ENCODE measurements at regions of chr11 and their contacts with region 1.

Region 1: DNA sequence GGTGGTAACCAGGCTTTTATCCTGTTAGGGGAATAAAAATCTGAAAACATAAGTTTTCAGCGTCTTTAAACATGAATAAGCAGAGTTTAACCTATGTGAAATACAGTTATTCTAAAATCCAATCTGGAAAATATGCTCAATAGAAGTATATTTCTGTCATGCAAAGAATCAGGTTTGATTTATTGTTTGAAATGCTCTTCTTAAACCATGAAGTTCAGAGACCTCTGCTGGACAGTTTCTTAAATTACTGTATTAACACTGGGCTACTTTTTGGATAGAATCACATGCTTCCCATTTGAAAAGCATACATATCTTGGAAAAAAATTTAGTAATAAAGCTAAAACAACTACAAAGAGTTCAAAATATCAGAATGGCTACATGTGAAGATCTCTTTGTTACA is 25.4 kb downstream of the APIP start:
- DNase-seq: peak in 4 of 9 donors; percentile 1 to 23 (median 11)
- ATAC-seq: no peak
- H3K4me3 ChIP-seq: no peak overlapping the region
- H3K4me3 Mint-ChIP-seq: no peak overlapping the region
- H3K27ac ChIP-seq: no peak overlapping the region
- H3K27ac Mint-ChIP-seq: no peak overlapping the region
- H3K4me1 ChIP-seq: no peaks in the 10 kb centered on the region
- H3K4me1 Mint-ChIP-seq: peaks cover 0 to 5% (median 0%) of the 10 kb centered on the region in 7 donors
- H3K27me3 ChIP-seq: no peaks in the 10 kb centered on the region
- H3K27me3 Mint-ChIP-seq: no peaks in the 10 kb centered on the region

Region 2: DNA sequence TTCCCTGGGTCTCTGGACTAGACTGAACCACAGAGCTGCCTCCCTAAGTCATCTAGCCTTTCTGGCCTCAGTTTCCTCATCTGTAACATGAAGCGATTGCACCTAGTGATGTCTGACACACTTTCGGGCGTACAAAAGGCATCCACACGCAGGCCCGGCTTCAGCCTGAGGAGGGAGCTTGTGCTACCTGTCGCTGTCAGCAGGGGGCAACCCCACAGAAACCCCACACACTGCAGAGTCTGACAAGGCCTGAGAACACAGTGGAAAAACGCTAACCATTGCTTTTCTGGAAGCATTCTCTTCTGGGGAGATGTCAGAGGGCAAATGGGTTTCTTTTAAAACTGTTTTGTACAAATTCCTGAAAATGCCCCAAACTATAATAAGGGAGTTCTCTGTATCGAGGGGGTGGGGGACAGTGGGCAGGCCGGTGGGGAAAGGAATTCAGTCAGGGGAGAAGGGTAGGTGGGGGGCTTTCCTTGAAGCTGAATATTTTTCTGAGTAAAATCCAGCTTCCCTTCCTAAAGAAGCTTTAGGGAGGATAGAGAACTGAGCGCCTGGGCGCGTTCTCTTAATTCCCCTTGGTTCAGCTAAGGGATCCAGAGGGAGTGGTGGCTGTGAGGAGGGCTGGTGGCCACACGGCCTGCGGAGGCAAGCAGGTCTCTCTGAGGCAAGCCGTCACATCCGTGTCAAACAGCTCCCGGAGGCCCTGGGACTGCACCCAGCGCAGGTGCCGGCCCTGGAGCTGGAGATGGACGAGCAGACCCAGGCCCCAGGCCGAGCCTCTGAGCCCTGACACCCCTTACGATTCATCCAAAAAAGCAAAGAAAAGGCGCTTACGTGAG is 377.8 kb before region 1 on chr11:
- CTCF ChIA-PET with region 1: no interaction called
- POLR2A ChIA-PET with region 1: no interaction called
- intact Hi-C with region 1: loop called (anchors 1 to 2 kb)
- DNase-seq: peak in 8 of 9 donors; percentile 3 to 37 (median 25)
- ATAC-seq: peak; percentile 82
- H3K4me3 ChIP-seq: no peak overlapping the region
- H3K4me3 Mint-ChIP-seq: no peak overlapping the region
- H3K27ac ChIP-seq: no peak overlapping the region
- H3K27ac Mint-ChIP-seq: no peak overlapping the region
- H3K4me1 ChIP-seq: no peaks in the 10 kb centered on the region
- H3K4me1 Mint-ChIP-seq: peaks cover 0 to 2% (median 0%) of the 10 kb centered on the region in 7 donors
- H3K27me3 ChIP-seq: no peaks in the 10 kb centered on the region
- H3K27me3 Mint-ChIP-seq: peaks cover 0 to 13% (median 0%) of the 10 kb centered on the region in 5 donors